AG04450 (cell line): ENCODE measurements at regions of chr22 and their contacts with region 1.

Region 1: GRCh38 chr22:42820066-42820763 is 36.9 kb downstream of the ARFGAP3 start:
- DNase-seq: peak; percentile 51
- H3K4me3 ChIP-seq: no peak overlapping the region
- H3K27ac ChIP-seq: no peak overlapping the region
- H3K27me3 ChIP-seq: no peaks in the 10 kb centered on the region
- CTCF ChIP-seq: peak; percentile 62

Region 2: DNA sequence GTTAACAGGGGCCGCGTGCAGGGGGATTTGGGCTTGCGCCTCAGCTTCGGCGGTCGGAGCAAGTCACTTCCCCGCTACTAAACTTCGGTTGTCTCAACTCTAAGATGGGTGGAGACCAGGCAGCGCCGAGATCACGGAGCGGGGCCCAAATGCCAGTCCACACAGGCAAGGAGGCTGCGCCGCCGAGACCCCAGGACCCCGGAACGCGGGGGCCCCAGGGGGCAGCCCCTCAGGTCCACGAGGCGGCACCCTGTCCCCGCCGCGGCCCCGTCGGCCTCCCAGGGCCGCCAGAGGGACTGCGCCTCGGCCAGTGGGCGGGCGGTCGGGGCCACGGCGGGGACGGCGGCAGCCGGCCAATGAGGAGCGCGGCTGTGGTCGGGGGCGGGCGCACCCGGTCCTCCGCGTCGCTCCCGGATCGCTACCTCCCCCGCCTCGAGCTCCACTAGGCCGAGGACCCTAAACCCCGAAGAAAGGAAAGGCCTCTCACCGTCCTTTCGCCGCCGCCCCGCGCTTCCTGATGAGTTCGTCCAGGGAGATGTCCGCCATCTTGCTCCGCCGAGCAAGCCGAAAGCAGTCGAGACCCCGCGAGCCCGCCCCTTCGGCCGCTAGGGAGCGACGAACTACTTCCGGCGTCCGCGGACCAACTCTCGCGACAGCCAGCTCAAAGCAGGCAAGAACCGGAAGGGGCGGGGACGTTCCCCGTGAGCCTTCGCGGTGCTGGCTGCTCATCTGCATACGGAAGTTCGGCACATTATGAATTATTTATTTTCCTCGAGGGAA is 205.7 kb before region 1 on chr22 and contains the start of gene POLDIP3:
- CTCF ChIA-PET with region 1: interaction called, 6 read pairs
- POLR2A ChIA-PET with region 1: interaction called, 10 read pairs
- DNase-seq: peak; percentile 97
- H3K4me3 ChIP-seq: peak within 1 kb of the TSS; percentile 76
- H3K27ac ChIP-seq: peak within 1 kb of the TSS; percentile 97
- H3K27me3 ChIP-seq: no peaks in the 10 kb centered on the region
- CTCF ChIP-seq: peak; percentile 31; the same call in 1 of the 2 replicates
- polyA plus RNA-seq, gene POLDIP3: 50.6 and 55.7 TPM in 2 replicates

Region 3: DNA sequence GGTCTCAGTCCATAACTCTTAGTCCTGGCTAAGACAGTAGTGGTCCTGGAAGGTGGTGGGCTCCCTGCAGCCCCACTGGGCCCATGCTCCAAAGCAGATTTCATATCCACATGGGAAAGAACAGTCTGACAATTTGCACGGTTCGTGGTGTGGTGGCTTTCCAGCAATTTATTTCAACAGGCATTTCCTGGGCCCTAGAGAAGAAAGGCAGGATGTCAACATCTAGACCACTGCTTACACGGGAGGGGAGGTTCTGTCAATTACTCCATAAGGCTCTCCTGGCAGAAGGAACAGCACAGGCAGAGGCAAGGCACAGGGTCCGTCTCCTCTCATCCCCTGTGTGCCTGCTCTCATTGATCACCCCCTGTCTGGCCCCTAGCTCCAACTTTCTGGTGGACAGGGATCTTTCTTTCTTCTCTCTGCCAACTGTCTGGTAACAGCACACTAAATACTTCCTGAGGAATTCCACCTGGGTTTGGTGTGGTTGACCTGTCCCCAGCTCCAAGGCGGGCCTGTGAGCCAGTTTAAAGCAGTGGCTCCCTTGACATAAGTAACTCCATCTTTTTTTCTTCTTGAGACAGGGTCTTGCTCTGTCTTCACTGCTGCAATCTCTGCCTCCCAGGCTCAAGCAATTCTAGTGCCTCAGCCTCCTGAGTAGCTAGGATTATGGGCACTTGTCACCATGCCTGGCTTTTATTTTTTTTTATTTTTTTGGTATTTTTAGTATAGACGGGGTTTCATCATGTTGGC is 94.4 kb before region 1 on chr22:
- CTCF ChIA-PET with region 1: interaction called, 10 read pairs
- POLR2A ChIA-PET with region 1: no interaction called
- DNase-seq: no peak
- H3K4me3 ChIP-seq: no peak overlapping the region
- H3K27ac ChIP-seq: no peak overlapping the region
- H3K27me3 ChIP-seq: no peaks in the 10 kb centered on the region
- CTCF ChIP-seq: no peak

Region 4: DNA sequence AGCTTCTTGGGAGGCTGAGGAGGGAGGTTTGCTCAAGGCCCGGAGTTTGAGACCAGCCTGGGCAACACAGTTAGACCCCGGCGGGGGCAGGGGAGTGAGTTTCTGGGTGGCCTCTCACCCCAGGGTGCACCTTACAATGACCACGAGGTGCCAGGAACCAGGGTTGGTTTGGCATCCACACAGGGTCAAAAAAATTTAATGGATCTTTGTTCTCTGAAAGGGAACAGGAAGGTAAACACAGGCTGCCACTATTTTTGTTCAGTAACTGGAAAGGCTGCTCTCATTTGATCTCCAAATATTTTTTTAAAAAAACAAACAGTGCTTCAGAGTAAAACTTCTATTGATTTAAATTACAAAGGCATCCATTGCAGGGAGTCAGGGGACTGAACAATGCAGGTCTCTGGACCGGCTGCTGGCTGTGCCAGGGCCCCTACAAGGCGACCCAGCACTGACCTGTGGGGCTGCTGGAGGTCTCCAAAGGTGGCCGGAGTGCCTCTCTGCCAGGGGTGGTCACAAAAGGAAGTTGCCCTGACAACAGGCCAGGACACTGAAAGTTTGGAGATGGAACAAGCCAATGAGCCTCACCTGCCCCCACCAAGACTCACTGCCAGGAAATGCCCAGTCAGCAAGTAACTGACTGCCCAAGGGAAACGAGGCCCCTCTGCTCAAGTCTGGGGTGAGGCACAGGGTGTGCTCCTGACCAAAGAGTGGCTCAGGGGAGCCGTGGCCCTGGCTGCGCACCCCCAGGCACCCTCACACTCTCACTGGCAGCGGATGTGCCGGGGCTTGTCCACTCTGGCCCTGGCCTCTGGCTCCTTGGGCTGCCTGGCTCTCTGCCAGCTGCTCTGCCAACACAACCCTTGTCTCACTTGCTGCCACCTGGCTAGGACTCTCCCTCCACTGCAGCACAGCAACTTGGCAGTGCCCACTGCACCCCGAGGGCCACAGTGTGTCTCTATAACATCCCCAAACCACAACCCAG is 14.9 kb before region 1 on chr22:
- CTCF ChIA-PET with region 1: interaction called, 12 read pairs
- POLR2A ChIA-PET with region 1: no interaction called
- DNase-seq: no peak
- H3K4me3 ChIP-seq: no peak overlapping the region
- H3K27ac ChIP-seq: peak overlapping the region; percentile 70
- H3K27me3 ChIP-seq: no peaks in the 10 kb centered on the region
- CTCF ChIP-seq: no peak

Region 5: DNA sequence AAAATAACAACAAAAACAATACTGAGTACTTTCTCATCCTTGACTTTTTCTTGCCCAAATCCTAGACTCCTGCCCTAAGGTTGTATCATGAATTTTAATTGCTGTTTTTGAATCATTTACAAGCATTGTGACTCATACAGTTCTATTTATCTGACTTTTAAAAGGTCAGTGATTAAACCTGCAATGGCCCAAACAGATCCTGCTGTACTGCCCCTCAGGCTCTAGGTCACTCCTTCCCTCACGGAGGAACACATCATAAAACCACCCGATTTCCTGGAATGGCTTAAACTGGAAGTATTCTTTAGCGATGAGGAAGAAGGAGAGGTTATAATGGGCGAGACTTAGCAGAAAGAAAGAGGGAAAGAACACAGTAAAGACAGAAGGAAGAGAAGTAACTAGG is 24.5 kb after region 1 on chr22:
- CTCF ChIA-PET with region 1: interaction called, 12 read pairs
- POLR2A ChIA-PET with region 1: interaction called, 11 read pairs
- DNase-seq: no peak
- H3K4me3 ChIP-seq: no peak overlapping the region
- H3K27ac ChIP-seq: no peak overlapping the region
- H3K27me3 ChIP-seq: no peaks in the 10 kb centered on the region
- CTCF ChIP-seq: no peak

Region 6: GRCh38 chr22:43042101-43042780 is 222.0 kb after region 1 on chr22:
- CTCF ChIA-PET with region 1: no interaction called
- POLR2A ChIA-PET with region 1: no interaction called
- DNase-seq: no peak
- H3K4me3 ChIP-seq: no peak overlapping the region
- H3K27ac ChIP-seq: no peak overlapping the region
- H3K27me3 ChIP-seq: no peaks in the 10 kb centered on the region
- CTCF ChIP-seq: no peak